Esophagus muscularis mucosa (tissue), 4 donors: ENCODE measurements at regions of chr9 and their contacts with region 1.

Region 1: GRCh38 chr9:2023532-2023931 is 8.4 kb downstream of the SMARCA2 start:
- DNase-seq: no peak
- H3K4me3 ChIP-seq: peak overlapping the region in 1 of 4 donors; percentile 5
- H3K27ac ChIP-seq: peak overlapping the region; percentile 7 to 59 (median 40)
- H3K4me1 ChIP-seq: peaks cover 83 to 94% (median 92%) of the 10 kb centered on the region in 4 donors
- H3K27me3 ChIP-seq: no peaks in the 10 kb centered on the region
- CTCF ChIP-seq: no peak
- EP300 ChIP-seq: no peak
- POLR2A ChIP-seq: no peak

Region 2: DNA sequence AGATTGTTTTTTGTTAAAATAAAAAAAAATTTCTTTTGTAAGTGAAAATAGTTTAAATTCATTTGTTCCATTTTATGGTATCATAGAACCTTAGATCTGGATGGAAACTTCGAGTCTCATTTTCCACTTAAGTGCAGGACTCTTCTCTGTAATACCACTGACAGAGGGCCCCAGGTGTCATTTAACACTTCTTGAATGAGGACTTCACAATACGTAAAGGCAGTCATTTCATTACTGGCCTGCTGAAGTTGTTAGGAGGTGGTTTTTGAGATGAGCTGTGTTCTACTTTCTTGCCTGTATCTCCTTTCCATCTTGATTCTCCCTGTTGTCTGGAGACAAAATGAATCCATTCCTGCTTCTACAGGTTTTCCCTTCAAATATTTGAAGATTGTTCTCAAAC is 518.0 kb before region 1 on chr9:
- intact Hi-C with region 1: no loop called
- DNase-seq: no peak
- H3K4me3 ChIP-seq: no peak overlapping the region
- H3K27ac ChIP-seq: no peak overlapping the region
- H3K4me1 ChIP-seq: no peaks in the 10 kb centered on the region
- H3K27me3 ChIP-seq: no peaks in the 10 kb centered on the region
- CTCF ChIP-seq: no peak
- EP300 ChIP-seq: no peak
- POLR2A ChIP-seq: no peak

Region 3: DNA sequence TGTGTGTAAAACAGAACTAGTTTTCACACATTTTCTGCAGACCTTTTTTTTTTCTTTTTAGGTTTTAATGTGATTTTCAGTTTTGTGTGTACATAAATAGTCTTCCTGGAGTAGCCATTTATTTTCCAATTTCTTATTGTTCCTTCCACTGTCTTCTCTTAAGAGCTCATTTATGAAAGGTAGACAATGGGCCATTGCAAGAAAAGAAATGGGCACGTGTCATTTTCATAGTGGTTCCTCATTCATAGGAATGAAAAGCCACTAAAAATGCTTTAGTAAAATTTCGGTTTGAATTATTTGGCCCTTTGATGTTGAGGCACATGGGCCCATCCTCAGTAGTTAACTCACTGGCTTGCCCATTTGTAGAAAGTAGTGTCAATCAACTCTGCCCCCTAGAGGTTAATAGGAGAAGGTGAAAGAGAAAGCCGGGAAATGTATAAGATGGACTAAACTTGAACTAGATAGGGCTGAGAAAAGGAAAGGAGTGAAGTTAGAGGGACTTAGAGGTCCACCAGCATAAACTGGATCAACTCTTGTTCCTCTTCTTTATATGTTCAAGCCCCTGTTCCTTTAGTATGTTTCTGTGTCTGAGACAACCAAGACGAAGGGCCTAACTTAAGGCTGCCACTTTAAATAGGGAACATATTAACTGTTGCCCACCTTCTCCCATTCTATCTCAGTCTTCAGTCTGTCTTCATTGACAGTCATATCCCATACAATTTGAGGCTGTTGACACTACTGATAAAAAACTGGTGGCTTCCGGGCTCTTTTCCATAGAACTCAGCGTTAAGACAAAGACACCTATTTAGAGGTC is 64.2 kb after region 1 on chr9:
- intact Hi-C with region 1: no loop called
- DNase-seq: no peak
- H3K4me3 ChIP-seq: no peak overlapping the region
- H3K27ac ChIP-seq: no peak overlapping the region
- H3K4me1 ChIP-seq: peaks cover 12 to 20% (median 15%) of the 10 kb centered on the region in 4 donors
- H3K27me3 ChIP-seq: no peaks in the 10 kb centered on the region
- CTCF ChIP-seq: peak; percentile 51 to 67 (median 51)
- EP300 ChIP-seq: no peak
- POLR2A ChIP-seq: no peak

Region 4: GRCh38 chr9:2241836-2242741 is 218.6 kb after region 1 on chr9:
- intact Hi-C with region 1: no loop called
- DNase-seq: no peak
- H3K4me3 ChIP-seq: peak overlapping the region; percentile 52 to 61 (median 58)
- H3K27ac ChIP-seq: peak overlapping the region; percentile 47 to 79 (median 66)
- H3K4me1 ChIP-seq: peaks cover 7 to 24% (median 20%) of the 10 kb centered on the region in 4 donors
- H3K27me3 ChIP-seq: no peaks in the 10 kb centered on the region
- CTCF ChIP-seq: peak in 2 of 3 experiments; percentile 2 to 9
- EP300 ChIP-seq: no peak
- POLR2A ChIP-seq: peak; percentile 79

Region 5: DNA sequence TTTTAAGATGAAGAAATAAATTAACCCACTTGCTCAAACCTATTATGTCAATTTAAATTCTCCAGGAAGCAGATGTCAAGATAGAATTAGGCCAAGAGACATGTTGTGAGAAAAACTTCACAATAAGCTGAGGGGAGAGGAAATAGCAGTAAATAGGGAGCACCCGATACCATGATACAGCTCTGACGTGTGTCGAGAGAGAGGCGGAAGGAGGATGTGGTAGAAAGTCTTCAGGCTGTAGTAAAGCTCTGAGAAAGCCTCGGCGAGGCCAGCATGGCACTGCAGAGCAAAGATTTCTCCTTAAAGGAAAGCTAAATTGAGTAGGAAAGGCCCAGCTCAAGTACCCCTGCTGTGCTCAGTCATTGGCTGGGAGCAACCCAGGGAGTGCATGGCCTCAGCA is 826.4 kb after region 1 on chr9:
- intact Hi-C with region 1: loop called (anchors 10 kb)
- DNase-seq: no peak
- H3K4me3 ChIP-seq: no peak overlapping the region
- H3K27ac ChIP-seq: no peak overlapping the region
- H3K4me1 ChIP-seq: peaks cover 7 to 14% (median 9%) of the 10 kb centered on the region in 4 donors
- H3K27me3 ChIP-seq: no peaks in the 10 kb centered on the region
- CTCF ChIP-seq: no peak
- EP300 ChIP-seq: no peak
- POLR2A ChIP-seq: no peak